ENCODE measurements at regions of chr11 and their contacts with region 1.

Region 1: GRCh38 chr11:8813658-8814057 is 97.3 kb upstream of the AKIP1 start:
- DNase-seq: peak; percentile 83
- ATAC-seq: peak; percentile 66 to 81 (median 78)
- H3K4me3 ChIP-seq: no peak overlapping the region
- H3K27ac ChIP-seq: peak overlapping the region; percentile 14
- H3K4me1 ChIP-seq: peaks cover 15% of the 10 kb centered on the region
- H3K27me3 ChIP-seq: no peaks in the 10 kb centered on the region
- CTCF ChIP-seq: peak; percentile 80

Region 2: GRCh38 chr11:8682303-8683114 is 131.1 kb before region 1 on chr11 and contains the starts of genes RPL27A and TRIM66:
- intact Hi-C with region 1: loop called in 1 of 2 experiments (anchors 5 kb)
- DNase-seq: peak; percentile 99 to 100
- ATAC-seq: peak; percentile 96 to 99 (median 98)
- H3K4me3 ChIP-seq: peak within 1 kb of the TSS; percentile 96
- H3K27ac ChIP-seq: peak within 1 kb of the TSS; percentile 93
- H3K4me1 ChIP-seq: peaks cover 23% of the 10 kb centered on the region
- H3K27me3 ChIP-seq: no peaks in the 10 kb centered on the region
- CTCF ChIP-seq: no peak
- total RNA-seq, gene RPL27A: 308 to 673 (median 565) TPM
- total RNA-seq, gene TRIM66: 2.0 to 3.9 (median 3.5) TPM

Region 3: GRCh38 chr11:8688414-8689362 is 125.0 kb before region 1 on chr11:
- intact Hi-C with region 1: loop called (anchors 2 to 5 kb)
- DNase-seq: peak; percentile 95 to 98
- ATAC-seq: peak; percentile 95 to 98 (median 97)
- H3K4me3 ChIP-seq: peak overlapping the region; percentile 68
- H3K27ac ChIP-seq: peak overlapping the region; percentile 88
- H3K4me1 ChIP-seq: peaks cover 29% of the 10 kb centered on the region
- H3K27me3 ChIP-seq: no peaks in the 10 kb centered on the region
- CTCF ChIP-seq: peak; percentile 24

Region 4: DNA sequence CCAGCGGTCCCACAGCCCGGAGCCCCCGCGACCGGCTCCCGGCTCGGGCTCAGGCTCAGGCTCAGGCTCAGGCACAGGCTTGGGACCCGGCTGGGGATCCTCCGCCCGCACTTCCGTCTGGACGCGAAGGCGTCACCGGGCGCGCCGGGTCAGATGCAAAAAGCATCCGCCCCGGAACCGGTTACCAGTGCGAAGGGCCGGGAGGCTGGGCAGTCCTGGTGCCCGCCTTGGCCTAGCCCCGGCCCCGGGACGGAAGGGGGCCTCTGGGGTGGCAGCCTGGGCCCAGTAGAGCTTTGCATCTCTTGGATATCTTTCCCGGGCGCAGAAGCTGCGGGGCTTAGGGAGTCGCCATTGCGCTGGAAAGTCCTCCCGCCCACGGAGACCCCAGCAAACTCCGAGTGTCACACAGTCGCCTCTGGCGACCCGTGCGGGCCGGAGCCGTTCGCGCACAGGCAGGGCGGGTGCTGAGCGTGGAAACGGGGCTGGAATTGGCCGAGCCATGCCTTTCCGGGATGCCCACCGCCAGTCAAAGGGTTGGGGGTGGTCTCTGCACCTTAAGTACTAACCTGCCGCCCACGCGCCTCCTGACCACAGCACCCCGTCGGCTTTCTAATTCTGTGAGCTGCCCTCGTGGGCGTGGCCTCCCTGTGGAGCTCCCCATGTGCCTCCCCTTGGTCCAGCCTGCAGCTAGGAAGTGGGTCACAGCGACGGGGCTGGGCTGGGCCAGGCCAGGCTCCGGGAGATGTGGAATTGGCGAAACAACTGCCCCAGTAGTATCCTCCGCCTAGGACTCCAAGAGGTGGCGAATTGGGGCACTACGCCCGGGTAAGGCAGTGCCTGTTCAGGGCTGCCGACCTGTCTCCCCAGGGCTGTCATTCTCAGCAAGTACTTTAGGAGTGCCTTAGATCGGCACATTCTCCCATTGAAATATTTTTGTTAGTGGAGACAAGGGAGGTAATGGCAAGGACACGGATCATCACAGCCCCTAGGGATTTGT is 151.0 kb after region 1 on chr11 and contains the start of gene TMEM9B:
- intact Hi-C with region 1: loop called in 1 of 2 experiments (anchors 10 kb)
- DNase-seq: peak; percentile 93 to 95
- ATAC-seq: peak; percentile 93 to 96 (median 94)
- H3K4me3 ChIP-seq: peak within 1 kb of the TSS; percentile 86
- H3K27ac ChIP-seq: peak within 1 kb of the TSS; percentile 98
- H3K4me1 ChIP-seq: peaks cover 34% of the 10 kb centered on the region
- H3K27me3 ChIP-seq: no peaks in the 10 kb centered on the region
- CTCF ChIP-seq: no peak
- total RNA-seq, gene TMEM9B: 32.1 to 54.5 (median 36.0) TPM